ENCODE measurements at regions of chr2 and their contacts with region 1.

Region 1: GRCh38 chr2:105521205-105521604 is 122.4 kb upstream of the FHL2 start:
- DNase-seq: peak in 1 of 2 experiments; percentile 30
- H3K4me3 ChIP-seq: no peak overlapping the region
- H3K4me3 Mint-ChIP-seq: no peak overlapping the region
- H3K27ac Mint-ChIP-seq: no peak overlapping the region
- H3K4me1 ChIP-seq: no peaks in the 10 kb centered on the region
- H3K4me1 Mint-ChIP-seq: no peaks in the 10 kb centered on the region
- H3K27me3 ChIP-seq: no peaks in the 10 kb centered on the region
- H3K27me3 Mint-ChIP-seq: no peaks in the 10 kb centered on the region
- CTCF ChIP-seq: peak; percentile 22 to 67

Region 2: GRCh38 chr2:105114551-105114950 is 406.7 kb before region 1 on chr2:
- CTCF ChIA-PET with region 1: no interaction called
- POLR2A ChIA-PET with region 1: no interaction called
- intact Hi-C with region 1: loop called (anchors 10 kb)
- DNase-seq: no peak
- H3K4me3 ChIP-seq: no peak overlapping the region
- H3K4me3 Mint-ChIP-seq: no peak overlapping the region
- H3K27ac Mint-ChIP-seq: no peak overlapping the region
- H3K4me1 ChIP-seq: peaks cover 8% of the 10 kb centered on the region
- H3K4me1 Mint-ChIP-seq: peaks cover 6% of the 10 kb centered on the region
- H3K27me3 ChIP-seq: no peaks in the 10 kb centered on the region
- H3K27me3 Mint-ChIP-seq: no peaks in the 10 kb centered on the region
- CTCF ChIP-seq: peak; percentile 68

Region 3: DNA sequence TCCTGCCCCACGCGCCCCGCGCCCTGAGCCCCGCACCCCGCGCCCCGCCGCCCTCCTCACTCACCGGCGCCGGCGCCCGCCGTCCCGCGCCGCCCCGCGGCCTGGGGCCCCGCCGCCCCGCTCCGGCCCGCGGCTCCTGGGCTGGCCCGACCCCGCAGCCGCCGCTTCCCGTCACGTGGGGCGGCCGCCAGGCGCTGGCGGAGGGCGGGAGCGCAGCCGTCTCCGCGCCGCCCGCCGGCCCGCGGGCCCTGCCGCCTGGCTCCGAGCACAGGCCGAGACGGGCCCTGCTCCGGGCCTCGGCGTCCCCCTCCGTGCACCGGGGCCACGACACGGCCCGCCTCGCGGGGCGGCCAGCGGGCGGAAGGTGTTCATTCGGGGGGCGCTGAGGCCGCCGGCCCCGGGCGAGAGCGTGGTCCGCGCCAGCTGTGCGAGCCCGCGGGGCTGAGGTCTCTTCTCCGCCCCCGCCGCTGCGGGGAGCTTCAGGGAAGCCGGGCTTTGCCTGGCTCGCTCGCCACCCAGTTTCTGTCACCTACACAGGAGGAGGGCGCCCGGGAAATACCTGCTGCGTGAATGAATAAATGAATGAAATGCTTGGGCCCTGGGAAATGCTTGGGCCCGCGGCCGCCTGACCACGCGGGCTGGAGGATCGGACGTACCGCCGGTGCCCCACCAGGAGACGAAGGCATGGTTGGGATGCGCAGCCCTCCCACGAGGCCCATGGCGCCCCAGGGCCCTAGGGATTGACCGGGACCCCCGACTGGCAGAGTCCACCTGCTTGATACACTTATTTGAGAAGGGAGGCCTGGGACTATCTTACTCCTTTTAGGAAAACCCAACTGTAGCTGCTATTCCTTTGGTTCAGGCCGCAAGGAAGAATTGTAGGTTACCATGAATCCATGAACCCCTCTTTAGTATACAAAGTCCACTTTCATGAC is 191.4 kb before region 1 on chr2 and contains the start of gene TGFBRAP1:
- CTCF ChIA-PET with region 1: no interaction called
- POLR2A ChIA-PET with region 1: no interaction called
- intact Hi-C with region 1: no loop called
- DNase-seq: peak; percentile 58 to 80
- H3K4me3 ChIP-seq: peak within 1 kb of the TSS; percentile 87
- H3K4me3 Mint-ChIP-seq: peak within 1 kb of the TSS; percentile 81
- H3K27ac Mint-ChIP-seq: peak within 1 kb of the TSS; percentile 89
- H3K4me1 ChIP-seq: peaks cover 11% of the 10 kb centered on the region
- H3K4me1 Mint-ChIP-seq: peaks cover 11% of the 10 kb centered on the region
- H3K27me3 ChIP-seq: no peaks in the 10 kb centered on the region
- H3K27me3 Mint-ChIP-seq: no peaks in the 10 kb centered on the region
- CTCF ChIP-seq: peak in 1 of 2 experiments; percentile 11
- total RNA-seq, gene TGFBRAP1: 25.7 and 26.0 TPM in 2 replicates

Region 4: DNA sequence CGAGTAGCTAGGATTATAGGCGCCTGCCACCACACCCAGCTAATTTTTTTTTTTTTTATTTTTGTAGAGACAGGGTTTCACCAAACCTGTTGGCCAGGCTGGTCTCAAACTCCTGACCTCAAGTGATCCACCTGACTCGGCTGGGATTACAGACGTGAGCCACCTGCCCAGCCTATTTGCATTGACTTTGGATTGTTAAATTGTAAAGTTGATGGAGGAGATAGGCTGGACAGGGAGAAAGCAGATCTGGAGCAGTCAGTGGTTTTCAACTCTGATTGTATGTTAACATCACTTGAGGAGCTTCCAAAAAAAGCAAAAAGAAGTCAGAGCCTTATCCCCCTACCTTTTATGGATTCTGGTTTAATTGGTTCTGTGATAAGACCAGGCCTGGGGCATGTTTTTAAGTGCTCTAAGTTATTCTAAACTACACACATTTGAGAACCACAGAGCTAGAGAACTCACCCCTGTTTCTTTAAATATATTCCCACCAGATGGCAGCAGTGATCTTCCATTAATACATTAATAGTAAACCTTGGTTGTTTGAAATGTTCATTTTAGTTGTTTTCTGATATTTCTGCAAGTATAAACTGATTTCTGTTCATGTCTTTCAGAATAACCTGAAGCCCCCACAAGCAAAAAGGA is 176.4 kb before region 1 on chr2:
- CTCF ChIA-PET with region 1: interaction called, 8 read pairs
- POLR2A ChIA-PET with region 1: interaction called, 3 read pairs
- intact Hi-C with region 1: loop called (anchors 1 kb)
- DNase-seq: peak in 1 of 2 experiments; percentile 50
- H3K4me3 ChIP-seq: no peak overlapping the region
- H3K4me3 Mint-ChIP-seq: no peak overlapping the region
- H3K27ac Mint-ChIP-seq: no peak overlapping the region
- H3K4me1 ChIP-seq: no peaks in the 10 kb centered on the region
- H3K4me1 Mint-ChIP-seq: peaks cover 5% of the 10 kb centered on the region
- H3K27me3 ChIP-seq: no peaks in the 10 kb centered on the region
- H3K27me3 Mint-ChIP-seq: no peaks in the 10 kb centered on the region
- CTCF ChIP-seq: peak; percentile 20 to 40

Region 5: DNA sequence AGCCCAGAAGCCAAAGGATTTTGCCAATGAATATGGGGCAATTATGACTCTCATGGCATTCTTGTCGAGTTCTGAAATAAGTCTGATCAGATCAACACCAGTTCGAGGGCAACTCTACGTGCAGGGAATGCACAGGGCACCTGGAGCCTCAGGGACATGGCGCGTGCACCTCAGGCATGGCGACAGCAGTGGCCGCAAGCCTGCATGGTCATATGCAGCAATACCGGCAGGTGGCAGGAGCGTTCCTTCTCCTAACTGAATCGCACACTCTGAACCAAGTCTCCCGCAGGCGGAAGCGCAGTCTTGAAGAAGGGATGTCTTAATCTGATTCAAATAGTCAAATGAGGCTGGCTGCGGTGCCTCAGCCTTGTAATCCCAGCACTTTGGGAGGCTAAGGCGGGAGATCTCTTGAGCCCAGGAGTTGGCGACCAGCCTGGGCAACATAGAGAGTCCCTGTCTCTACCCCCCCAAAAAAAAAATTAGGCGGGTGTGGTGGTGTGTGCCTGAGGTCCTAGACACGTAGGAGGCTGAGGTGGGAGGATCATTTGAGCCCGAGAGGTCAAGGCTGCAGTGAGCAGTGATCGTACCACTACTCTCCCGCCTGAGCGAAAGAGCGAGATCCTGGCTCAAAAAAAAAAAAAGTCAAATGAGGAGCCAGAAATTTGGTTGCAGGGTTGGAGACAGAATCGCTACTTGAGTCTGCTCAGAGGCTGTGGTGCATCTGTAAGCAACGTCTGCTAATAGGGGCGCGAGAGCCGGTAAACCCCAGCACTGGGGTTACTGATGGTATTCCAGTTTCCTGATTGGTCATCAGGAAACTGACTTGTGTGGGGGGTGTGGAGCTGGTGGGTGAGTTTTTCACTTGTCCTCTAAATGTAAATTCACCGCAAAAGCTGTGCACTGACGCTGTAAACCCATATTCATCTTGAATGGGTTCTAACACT is 151.2 kb before region 1 on chr2:
- CTCF ChIA-PET with region 1: interaction called, 3 read pairs
- POLR2A ChIA-PET with region 1: no interaction called
- intact Hi-C with region 1: loop called (anchors 1 kb)
- DNase-seq: peak; percentile 74 to 77
- H3K4me3 ChIP-seq: no peak overlapping the region
- H3K4me3 Mint-ChIP-seq: no peak overlapping the region
- H3K27ac Mint-ChIP-seq: peak overlapping the region; percentile 47
- H3K4me1 ChIP-seq: peaks cover 3% of the 10 kb centered on the region; the same call in 1 of the 2 replicates
- H3K4me1 Mint-ChIP-seq: peaks cover 12% of the 10 kb centered on the region
- H3K27me3 ChIP-seq: no peaks in the 10 kb centered on the region
- H3K27me3 Mint-ChIP-seq: no peaks in the 10 kb centered on the region
- CTCF ChIP-seq: peak; percentile 72 to 75

Region 6: DNA sequence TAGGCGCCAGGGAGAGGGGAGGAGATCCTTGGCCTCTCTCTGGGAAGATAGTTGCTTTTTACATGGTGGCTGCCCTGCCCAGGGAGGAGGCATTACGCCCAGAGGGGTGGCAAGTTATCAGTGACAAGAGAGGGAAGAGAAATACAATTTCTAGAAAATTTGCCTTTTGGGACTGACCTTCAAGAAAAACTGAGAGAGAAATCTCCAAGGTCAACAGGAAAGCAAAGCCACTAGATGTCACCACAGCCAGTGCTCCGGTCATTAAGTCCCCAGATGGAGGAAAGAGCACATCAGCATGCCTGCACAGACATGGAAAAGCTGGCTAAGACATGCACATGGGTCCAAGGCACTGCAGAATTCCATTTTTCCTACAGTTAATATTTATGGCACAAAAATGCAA is 143.4 kb before region 1 on chr2:
- CTCF ChIA-PET with region 1: interaction called, 5 read pairs
- POLR2A ChIA-PET with region 1: no interaction called
- intact Hi-C with region 1: loop called (anchors 1 kb)
- DNase-seq: peak in 1 of 2 experiments; percentile 40
- H3K4me3 ChIP-seq: no peak overlapping the region
- H3K4me3 Mint-ChIP-seq: no peak overlapping the region
- H3K27ac Mint-ChIP-seq: no peak overlapping the region
- H3K4me1 ChIP-seq: peaks cover 46% of the 10 kb centered on the region
- H3K4me1 Mint-ChIP-seq: peaks cover 27% of the 10 kb centered on the region
- H3K27me3 ChIP-seq: no peaks in the 10 kb centered on the region
- H3K27me3 Mint-ChIP-seq: no peaks in the 10 kb centered on the region
- CTCF ChIP-seq: peak; percentile 21 to 34

Region 7: GRCh38 chr2:105454801-105455485 is 66.3 kb before region 1 on chr2:
- CTCF ChIA-PET with region 1: no interaction called
- POLR2A ChIA-PET with region 1: no interaction called
- intact Hi-C with region 1: loop called (anchors 1 kb)
- DNase-seq: peak; percentile 60 to 70
- H3K4me3 ChIP-seq: no peak overlapping the region
- H3K4me3 Mint-ChIP-seq: no peak overlapping the region
- H3K27ac Mint-ChIP-seq: peak overlapping the region; percentile 91
- H3K4me1 ChIP-seq: peaks cover 15% of the 10 kb centered on the region
- H3K4me1 Mint-ChIP-seq: peaks cover 16% of the 10 kb centered on the region
- H3K27me3 ChIP-seq: no peaks in the 10 kb centered on the region
- H3K27me3 Mint-ChIP-seq: no peaks in the 10 kb centered on the region
- CTCF ChIP-seq: peak; percentile 44 to 61

Region 8: GRCh38 chr2:105595536-105595935 is 74.3 kb after region 1 on chr2:
- CTCF ChIA-PET with region 1: no interaction called
- POLR2A ChIA-PET with region 1: no interaction called
- intact Hi-C with region 1: no loop called
- DNase-seq: no peak
- H3K4me3 ChIP-seq: no peak overlapping the region
- H3K4me3 Mint-ChIP-seq: no peak overlapping the region
- H3K27ac Mint-ChIP-seq: no peak overlapping the region
- H3K4me1 ChIP-seq: no peaks in the 10 kb centered on the region
- H3K4me1 Mint-ChIP-seq: peaks cover 6% of the 10 kb centered on the region
- H3K27me3 ChIP-seq: no peaks in the 10 kb centered on the region
- H3K27me3 Mint-ChIP-seq: no peaks in the 10 kb centered on the region
- CTCF ChIP-seq: peak in 1 of 2 experiments; percentile 2